Right cardiac atrium (tissue), 5 donors: ENCODE measurements at regions of chr5 and their contacts with region 1.

Region 1: GRCh38 chr5:140564196-140565023 is at the starts of genes APBB3 and SLC35A4:
- DNase-seq: peak; percentile 98
- ATAC-seq: peak; percentile 94 to 96
- H3K4me3 ChIP-seq: peak within 1 kb of the TSS; percentile 58
- H3K27ac ChIP-seq: peak within 1 kb of the TSS; percentile 84
- H3K4me1 ChIP-seq: peaks cover 14% of the 10 kb centered on the region
- H3K27me3 ChIP-seq: no peaks in the 10 kb centered on the region
- total RNA-seq, gene APBB3: 13.2 to 19.2 (median 16.0) TPM
- total RNA-seq, gene SLC35A4: 58.2 to 77.3 (median 71.0) TPM

Region 2: GRCh38 chr5:140322751-140323731 is 241.4 kb before region 1 on chr5:
- intact Hi-C with region 1: no loop called
- DNase-seq: peak; percentile 34 to 72 (median 71)
- ATAC-seq: peak; percentile 77 to 79
- H3K4me3 ChIP-seq: no peak overlapping the region
- H3K27ac ChIP-seq: peak overlapping the region; percentile 76
- H3K4me1 ChIP-seq: peaks cover 13% of the 10 kb centered on the region
- H3K27me3 ChIP-seq: no peaks in the 10 kb centered on the region

Region 3: DNA sequence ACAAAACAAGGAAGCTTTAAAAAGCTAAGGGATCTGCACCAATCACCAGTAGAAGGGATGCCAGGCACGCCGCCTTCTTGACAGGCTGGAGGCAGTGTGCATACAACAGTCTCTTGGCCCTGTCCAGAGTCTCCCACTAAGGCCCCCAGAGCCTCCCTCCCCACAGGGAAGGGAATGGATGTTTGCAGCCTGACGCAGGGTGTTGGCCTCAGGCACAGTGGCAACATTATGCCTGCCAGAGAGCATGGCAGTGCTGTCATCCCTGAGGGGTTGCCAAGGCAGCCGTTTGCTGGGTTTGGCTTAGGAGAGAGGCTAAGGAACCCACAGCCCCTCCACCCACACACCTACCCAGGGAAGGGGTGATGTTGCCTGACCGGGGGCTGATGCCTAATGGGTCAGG is 222.8 kb before region 1 on chr5:
- intact Hi-C with region 1: no loop called
- DNase-seq: peak; percentile 56 to 81 (median 76)
- ATAC-seq: peak; percentile 49 to 68
- H3K4me3 ChIP-seq: no peak overlapping the region
- H3K27ac ChIP-seq: peak overlapping the region; percentile 82
- H3K4me1 ChIP-seq: peaks cover 19% of the 10 kb centered on the region
- H3K27me3 ChIP-seq: no peaks in the 10 kb centered on the region

Region 4: DNA sequence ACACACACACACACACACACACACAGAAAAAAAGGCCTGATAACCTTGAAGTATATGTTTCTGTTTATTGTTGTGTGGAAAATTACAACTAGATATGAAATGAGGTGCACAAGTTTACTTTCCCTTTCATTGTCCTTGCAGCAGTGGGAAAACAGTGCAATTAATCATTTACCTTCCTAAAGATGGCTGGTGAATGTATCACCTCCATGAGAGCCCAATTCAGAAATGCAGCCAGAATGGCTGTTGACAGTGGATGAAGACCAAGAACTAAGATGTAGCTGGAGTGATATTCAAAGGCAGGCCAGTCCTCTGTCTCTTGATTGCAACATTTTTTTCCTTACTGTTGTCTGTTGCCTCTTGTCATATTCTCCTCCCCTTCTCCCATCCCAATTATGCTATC is 66.5 kb before region 1 on chr5:
- intact Hi-C with region 1: no loop called
- DNase-seq: no peak
- ATAC-seq: no peak
- H3K4me3 ChIP-seq: no peak overlapping the region
- H3K27ac ChIP-seq: no peak overlapping the region
- H3K4me1 ChIP-seq: no peaks in the 10 kb centered on the region
- H3K27me3 ChIP-seq: no peaks in the 10 kb centered on the region

Region 5: DNA sequence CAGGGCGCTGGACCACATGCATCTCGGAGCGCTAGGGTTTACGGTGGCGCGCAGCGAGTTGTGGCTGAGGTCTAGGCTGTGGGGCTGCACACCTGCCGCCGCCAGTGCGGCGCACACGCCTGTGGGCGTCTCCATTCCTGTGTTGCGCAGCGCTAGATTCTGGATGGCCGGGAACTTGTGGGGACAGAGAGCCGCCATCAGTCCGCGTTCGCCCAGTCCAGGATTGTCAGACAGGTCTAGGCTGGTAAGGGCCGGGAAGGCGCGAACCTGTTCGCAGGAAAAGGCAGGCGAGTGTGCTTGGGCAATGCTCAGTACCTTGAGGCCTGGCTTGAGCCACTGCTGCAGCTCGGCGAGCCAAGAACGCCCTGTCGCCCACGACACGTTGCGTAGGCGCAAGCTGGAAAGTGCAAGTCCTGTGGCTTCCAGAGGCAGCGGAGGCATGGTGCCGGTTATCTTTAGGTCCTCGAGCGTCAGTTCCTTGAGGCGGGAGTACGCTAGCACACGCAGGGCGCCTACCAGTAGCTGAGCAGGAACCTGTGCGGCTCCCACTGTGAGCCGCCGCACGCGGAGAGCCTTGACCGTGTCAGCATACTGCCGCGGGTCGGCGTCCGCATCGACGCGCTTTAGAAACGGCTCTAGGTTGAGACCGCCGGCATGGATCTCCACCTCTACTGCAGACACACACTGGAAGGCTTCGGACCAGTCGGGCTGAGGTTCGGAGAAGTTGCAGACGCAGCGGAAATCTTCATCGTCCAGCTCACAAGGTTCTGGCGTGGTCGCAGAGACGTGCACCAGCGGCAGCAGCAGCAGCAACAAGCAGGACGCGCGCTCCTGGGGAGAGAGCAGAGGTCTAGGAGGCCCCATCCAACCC is 68.0 kb after region 1 on chr5:
- intact Hi-C with region 1: loop called in 3 of 4 experiments (anchors 5 to 10 kb)
- DNase-seq: peak; percentile 67 to 84 (median 83)
- ATAC-seq: peak; percentile 80 to 81
- H3K4me3 ChIP-seq: peak overlapping the region; percentile 44
- H3K27ac ChIP-seq: peak overlapping the region; percentile 20
- H3K4me1 ChIP-seq: no peaks in the 10 kb centered on the region
- H3K27me3 ChIP-seq: no peaks in the 10 kb centered on the region